ENCODE measurements at regions of chr11 and their contacts with region 1.

Region 1: GRCh38 chr11:34105079-34105956 is at the start of gene NAT10:
- DNase-seq: peak; percentile 87
- H3K4me3 ChIP-seq: peak within 1 kb of the TSS; percentile 70 to 91 (median 76)
- H3K27ac ChIP-seq: peak within 1 kb of the TSS; percentile 93 to 96 (median 94)
- H3K4me1 ChIP-seq: peaks cover 7 to 34% (median 12%) of the 10 kb centered on the region in 3 donors
- H3K27me3 ChIP-seq: no peaks in the 10 kb centered on the region
- CTCF ChIP-seq: peak in 3 of 6 experiments; percentile 15 to 47 (median 26)
- POLR2A ChIP-seq: peak in 3 of 4 donors; percentile 69 to 82 (median 70)
- total RNA-seq, gene NAT10: 17.6 to 35.9 (median 32.6) TPM

Region 2: DNA sequence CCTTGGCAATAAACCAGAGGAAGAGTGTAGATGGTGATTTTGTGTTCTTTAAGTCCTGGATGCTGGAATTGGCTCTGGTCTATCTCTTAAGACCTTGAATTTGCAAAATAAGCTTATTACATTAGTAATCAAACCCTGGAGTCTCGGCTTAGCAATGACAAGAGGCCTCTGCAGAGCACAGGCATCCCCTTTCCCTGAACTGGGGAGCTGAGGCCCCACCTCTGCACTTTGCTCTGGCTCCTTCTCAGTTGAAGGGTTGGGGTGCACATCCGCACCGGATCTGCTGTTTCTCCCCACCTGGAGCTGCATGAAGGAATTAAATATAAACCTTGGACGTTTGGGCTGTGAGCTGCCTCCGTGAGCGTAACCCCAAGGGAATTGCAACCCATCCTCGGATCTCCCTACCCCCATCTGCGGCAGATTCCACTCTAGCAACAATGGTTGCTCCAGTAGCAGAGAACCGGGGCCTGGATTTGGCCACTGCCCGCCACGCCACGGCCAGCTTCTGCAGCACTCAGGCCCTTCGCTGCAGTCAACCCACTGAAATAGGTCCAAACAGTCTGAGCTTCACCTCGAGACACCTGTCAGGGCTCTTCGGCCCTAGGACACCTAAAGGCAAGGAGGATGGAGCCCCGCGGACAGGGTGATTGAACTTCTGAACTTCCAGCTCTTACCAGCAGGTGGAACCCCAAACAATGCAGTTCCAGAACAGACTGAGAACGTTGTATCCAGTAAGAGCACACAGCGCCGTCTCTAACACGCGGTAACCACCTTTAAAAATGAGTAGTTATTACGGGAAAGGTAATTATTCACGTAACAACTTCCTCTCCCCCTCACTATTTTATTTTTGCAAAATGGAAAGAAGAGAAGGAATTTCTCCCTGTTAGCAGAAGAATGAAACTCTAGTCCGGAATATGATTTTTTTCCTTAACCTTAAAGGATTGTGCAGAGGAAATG is 108.5 kb before region 1 on chr11:
- intact Hi-C with region 1: loop called (anchors 5 kb)
- DNase-seq: peak; percentile 8
- H3K4me3 ChIP-seq: peak overlapping the region in 1 of 4 donors; percentile 44
- H3K27ac ChIP-seq: no peak overlapping the region
- H3K4me1 ChIP-seq: peaks cover 0 to 16% (median 9%) of the 10 kb centered on the region in 3 donors
- H3K27me3 ChIP-seq: peaks cover 0 to 7% (median 0%) of the 10 kb centered on the region in 4 donors
- CTCF ChIP-seq: peak; percentile 57 to 88 (median 84)
- POLR2A ChIP-seq: no peak

Region 3: DNA sequence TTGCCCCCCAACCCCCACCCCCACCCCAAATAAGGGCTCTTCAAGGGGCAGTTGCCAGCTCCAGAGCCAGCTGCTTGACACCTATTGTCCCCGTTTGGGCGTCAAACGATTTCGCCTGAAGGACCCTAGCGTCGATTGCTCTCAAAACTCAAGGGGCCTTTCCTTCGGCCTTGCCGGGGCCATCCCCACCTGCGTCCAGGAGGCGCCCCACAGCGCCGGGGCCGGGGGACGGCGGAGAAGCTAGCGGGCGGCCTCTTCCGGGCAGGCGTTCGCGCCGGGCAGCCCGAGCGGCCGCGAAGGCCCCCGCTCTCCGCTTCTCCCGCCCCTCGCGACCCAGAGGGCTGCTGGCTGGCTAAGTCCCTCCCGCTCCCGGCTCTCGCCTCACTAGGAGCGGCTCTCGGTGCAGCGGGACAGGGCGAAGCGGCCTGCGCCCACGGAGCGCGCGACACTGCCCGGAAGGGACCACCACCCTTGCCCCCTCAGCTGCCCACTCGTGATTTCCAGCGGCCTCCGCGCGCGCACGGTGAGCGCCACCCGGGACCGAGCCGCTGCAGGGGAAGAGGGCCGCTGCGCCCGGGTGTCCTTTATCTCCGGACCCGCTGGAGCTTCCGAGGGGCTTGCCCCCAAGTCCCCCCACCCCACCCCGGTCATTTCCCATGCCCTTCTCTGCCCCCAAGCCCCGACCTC is 53.8 kb before region 1 on chr11 and contains the start of gene CAPRIN1:
- intact Hi-C with region 1: loop called (anchors 10 kb)
- DNase-seq: peak; percentile 44
- H3K4me3 ChIP-seq: peak within 1 kb of the TSS; percentile 91 to 97 (median 96)
- H3K27ac ChIP-seq: peak within 1 kb of the TSS; percentile 97 to 99 (median 98)
- H3K4me1 ChIP-seq: peaks cover 0 to 43% (median 31%) of the 10 kb centered on the region in 3 donors
- H3K27me3 ChIP-seq: no peaks in the 10 kb centered on the region
- CTCF ChIP-seq: peak in 1 of 6 experiments; percentile 6
- POLR2A ChIP-seq: peak in 2 of 4 donors; percentile 78 to 80
- total RNA-seq, gene CAPRIN1: 94.1 to 151 (median 132) TPM

Region 4: DNA sequence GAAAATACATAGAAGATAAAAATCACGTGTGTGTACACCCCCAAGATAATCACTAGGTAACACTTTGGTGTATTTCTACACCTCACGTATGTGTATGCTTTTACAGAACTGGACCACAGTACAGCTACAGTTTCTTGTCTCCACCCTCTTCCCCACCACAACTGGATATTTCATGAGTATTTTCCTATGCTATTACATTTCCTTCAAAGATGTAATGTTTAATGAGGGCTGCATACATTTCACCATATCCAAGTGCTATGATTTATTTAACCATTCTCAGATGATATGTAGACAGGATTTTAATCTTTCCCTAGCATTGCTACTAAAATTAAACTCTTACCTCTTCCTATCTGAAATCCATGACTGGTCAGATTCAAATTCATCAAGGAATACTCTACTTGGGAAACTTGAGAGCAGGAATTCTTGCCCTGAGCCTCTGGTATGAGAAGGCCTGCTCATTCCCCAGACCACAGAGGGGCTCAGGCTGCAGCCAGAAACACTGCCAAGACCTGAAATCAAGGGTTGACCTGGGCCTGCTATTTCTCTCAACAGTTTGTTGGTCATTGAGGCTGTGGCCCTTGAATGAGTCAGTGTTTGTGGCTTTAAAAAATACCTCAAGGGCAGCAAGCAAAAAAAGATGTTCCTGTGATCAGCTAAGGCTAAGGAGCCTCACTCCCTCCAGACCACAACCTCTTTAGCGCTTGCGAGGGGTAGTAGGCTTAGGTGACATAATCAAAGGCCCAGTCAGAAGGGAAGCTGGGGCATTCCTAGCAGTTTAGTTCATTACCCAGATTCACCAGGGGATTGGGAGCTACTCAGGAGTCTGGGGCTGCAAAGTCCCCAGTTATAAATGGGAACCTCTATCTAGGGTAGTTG is 197.0 kb after region 1 on chr11:
- intact Hi-C with region 1: no loop called
- DNase-seq: no peak
- H3K4me3 ChIP-seq: no peak overlapping the region
- H3K27ac ChIP-seq: no peak overlapping the region
- H3K4me1 ChIP-seq: peaks cover 0 to 5% (median 0%) of the 10 kb centered on the region in 3 donors
- H3K27me3 ChIP-seq: no peaks in the 10 kb centered on the region
- CTCF ChIP-seq: no peak
- POLR2A ChIP-seq: no peak

Measured in esophagus squamous epithelium (tissue), 5 donors.